ENCODE measurements at regions of chr4 and their contacts with region 1.

Region 1: DNA sequence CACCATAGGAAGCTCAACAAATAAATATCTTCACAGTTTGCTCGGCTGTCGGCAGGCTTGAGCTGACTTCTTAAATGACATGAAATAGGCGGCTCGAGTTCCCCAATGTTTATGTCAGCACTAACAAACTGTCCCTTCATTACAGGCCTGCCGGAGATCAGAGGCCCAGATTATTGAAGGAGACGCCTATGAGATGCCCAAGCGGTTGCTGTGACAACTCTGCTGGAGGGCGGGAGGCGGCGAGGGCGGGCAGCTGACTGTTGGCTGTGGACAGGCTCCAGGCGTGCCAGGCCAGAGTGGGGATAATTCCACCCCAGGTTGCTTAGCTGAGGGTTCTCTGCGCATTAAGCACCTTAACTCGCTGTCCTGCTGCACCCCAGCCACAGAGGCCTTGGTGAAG is 39.2 kb upstream of the MSX1 start:
- DNase-seq: peak; percentile 69 to 96 (median 80)

Region 2: DNA sequence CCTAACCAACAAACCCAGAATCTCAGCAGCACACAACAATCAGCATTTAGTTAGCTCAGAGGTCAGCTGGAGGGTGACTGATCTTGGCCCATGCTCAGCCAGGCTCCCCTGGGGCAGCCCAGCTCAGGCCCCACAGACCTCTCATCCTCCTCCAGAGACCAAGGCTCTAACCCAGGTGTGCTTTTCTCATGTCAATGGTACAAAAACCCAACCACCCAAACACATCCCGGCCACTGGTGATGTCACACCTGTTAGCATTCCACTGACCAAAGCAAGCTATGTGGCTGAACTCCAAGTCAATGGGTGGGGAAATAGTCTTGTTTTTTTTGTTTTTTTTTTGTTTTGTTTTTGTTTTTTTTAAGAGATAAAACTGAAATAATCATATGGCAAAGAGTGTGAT is 121.5 kb after region 1 on chr4:
- intact Hi-C with region 1: loop called (anchors 10 kb)
- DNase-seq: no peak